Ovary (tissue), 10 donors: ENCODE measurements at regions of chr2 and their contacts with region 1.

Region 1: DNA sequence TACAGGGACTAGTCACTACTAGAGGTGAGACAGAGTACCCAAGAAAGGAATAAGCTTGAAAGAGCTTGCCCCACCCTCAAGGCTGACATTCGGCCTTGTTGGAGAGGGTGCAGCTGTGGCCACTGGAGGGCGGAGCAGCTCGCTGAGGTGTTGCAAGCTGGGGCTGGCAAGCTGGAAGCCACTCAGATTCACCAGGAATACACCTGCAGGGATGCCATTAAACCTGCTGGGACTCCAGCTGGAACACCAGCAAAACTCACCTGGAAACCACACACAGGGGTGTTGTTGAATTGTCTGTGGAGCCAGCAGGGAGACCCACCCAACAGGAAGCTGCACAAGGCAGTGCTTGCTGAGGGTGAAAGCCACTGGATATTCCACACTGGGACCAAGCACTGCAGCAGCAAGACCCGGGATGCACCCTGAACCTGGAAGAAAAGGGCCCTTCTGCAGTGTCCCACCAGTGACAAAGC is 26.1 kb downstream of the KCTD18 start:
- DNase-seq: no peak
- H3K4me3 ChIP-seq: no peak overlapping the region
- H3K27ac ChIP-seq: no peak overlapping the region
- H3K4me1 ChIP-seq: no peaks in the 10 kb centered on the region
- H3K27me3 ChIP-seq: no peaks in the 10 kb centered on the region
- CTCF ChIP-seq: no peak
- EP300 ChIP-seq: no peak
- POLR2A ChIP-seq: no peak

Region 2: DNA sequence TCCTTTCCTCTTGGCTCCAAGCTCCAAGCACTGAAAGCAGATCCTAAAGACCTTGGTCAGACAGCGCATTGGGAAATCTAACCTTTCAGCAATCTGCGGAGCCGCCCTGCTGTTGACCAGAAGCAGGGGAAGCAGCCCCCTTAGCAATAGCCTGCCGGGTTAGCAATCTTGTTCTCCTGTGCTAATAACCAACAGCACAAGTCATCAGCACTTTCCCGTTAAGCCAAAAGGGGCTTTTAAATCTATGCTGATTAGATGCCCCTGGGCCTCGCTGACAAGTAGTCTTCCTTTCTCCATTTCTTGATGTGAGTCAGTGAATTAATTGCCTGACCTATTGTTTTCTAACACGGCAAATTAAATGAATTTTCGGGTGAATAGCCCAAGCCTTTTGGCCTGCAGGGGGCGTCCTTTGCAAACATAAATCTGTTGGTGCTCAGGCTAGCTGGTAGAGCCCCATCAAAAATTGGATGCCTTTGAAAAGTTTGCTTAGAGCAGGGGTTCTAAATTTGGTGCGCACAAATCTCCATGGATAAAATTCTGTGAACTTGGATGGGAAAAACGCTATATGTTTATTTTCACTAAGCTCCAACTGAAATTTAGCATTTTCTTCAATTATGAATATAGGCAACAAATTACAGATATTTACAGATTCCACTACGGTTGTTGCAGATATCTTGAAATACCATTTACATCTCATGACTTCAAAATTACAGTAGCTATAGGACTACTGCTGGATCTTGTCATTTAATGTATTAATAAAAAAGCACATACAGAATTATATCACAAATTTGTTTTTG is 503.7 kb before region 1 on chr2:
- intact Hi-C with region 1: loop called (anchors 2 to 10 kb)
- DNase-seq: peak; percentile 81 to 93 (median 89)
- H3K4me3 ChIP-seq: no peak overlapping the region
- H3K27ac ChIP-seq: no peak overlapping the region
- H3K4me1 ChIP-seq: no peaks in the 10 kb centered on the region
- H3K27me3 ChIP-seq: no peaks in the 10 kb centered on the region
- CTCF ChIP-seq: peak; percentile 67 to 86 (median 84)
- EP300 ChIP-seq: no peak
- POLR2A ChIP-seq: no peak

Region 3: DNA sequence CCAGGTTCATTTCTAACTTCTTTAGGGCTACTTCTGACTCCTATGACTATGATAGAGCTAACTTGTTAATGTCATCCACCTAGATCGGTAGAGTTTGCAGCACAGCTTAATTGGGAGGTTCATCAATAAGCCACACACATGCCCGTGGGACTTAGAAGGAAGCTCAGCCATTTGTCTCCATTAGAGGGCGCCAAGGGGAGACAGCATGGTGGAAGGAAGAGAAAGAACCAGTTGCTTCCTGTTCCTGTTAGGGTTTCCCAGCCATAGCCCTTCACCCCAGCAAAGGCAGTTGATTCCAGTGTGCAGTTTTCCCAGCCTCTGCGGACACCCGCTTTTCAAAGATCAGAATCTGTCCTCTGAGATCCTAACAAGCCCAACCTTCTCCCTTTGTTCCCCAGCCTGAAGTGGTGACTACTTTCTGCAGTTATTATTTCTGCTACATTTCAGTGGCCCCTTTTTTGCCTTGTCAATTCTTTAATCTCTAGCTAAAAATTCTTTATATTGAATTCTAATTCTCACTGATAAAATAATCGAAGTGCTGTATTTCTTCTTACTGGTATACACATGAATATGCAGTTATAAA is 498.0 kb before region 1 on chr2:
- intact Hi-C with region 1: loop called in 2 of 4 experiments (anchors 2 to 10 kb)
- DNase-seq: peak; percentile 38 to 63 (median 41)
- H3K4me3 ChIP-seq: no peak overlapping the region
- H3K27ac ChIP-seq: no peak overlapping the region
- H3K4me1 ChIP-seq: no peaks in the 10 kb centered on the region
- H3K27me3 ChIP-seq: no peaks in the 10 kb centered on the region
- CTCF ChIP-seq: peak in 2 of 3 donors; percentile 24 to 34
- EP300 ChIP-seq: no peak
- POLR2A ChIP-seq: no peak

Region 4: DNA sequence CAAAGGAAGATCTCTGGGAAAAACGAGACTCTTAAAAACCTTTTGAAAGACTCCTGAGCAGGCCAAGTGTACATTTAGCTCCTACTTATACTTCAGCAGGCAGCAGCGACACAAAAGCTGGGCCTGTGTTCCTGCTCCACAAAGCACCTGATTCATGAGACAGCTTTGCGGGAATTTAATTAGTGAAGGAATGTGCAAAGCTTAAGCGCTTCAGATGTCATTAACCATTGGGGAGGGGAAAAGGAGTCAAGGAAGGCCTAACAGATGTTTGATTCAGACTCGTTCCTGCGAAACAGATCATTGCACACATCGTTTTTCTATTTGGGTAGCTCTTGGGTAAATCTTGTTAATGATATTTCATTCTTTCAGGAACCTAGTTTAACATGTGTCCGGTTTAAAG is 402.5 kb before region 1 on chr2:
- intact Hi-C with region 1: loop called in 1 of 4 experiments (anchors 5 kb)
- DNase-seq: no peak
- H3K4me3 ChIP-seq: no peak overlapping the region
- H3K27ac ChIP-seq: no peak overlapping the region
- H3K4me1 ChIP-seq: peaks cover 2% of the 10 kb centered on the region
- H3K27me3 ChIP-seq: no peaks in the 10 kb centered on the region
- CTCF ChIP-seq: no peak
- EP300 ChIP-seq: no peak
- POLR2A ChIP-seq: no peak

Region 5: GRCh38 chr2:200306196-200306930 is 177.4 kb before region 1 on chr2 and contains the start of gene SPATS2L:
- intact Hi-C with region 1: loop called in 3 of 4 experiments (anchors 10 kb)
- DNase-seq: peak; percentile 81 to 86 (median 83)
- H3K4me3 ChIP-seq: peak within 1 kb of the TSS; percentile 73
- H3K27ac ChIP-seq: peak within 1 kb of the TSS; percentile 95
- H3K4me1 ChIP-seq: peaks cover 5% of the 10 kb centered on the region
- H3K27me3 ChIP-seq: no peaks in the 10 kb centered on the region
- CTCF ChIP-seq: no peak
- EP300 ChIP-seq: no peak
- POLR2A ChIP-seq: peak; percentile 22
- total RNA-seq, gene SPATS2L: 36.5 to 88.2 (median 70.6) TPM

Region 6: DNA sequence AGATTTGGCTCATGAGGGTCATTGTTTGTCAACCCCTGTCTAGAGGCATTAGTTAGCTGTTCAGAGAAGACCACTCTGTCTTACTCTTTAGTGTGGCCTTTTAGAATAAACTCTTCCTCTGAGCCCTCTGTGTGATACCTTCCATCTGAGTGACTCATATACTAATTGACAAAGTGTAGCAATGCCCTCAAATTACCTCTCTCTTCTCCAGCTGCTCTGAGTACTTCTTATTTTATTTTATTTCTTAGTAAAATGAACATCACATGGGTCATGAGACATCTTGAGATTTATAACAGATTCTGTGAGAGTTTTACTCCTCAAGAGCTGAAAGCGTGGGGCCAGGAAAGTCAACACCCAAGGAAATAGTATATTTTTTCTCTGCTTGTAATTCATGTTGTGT is 41.3 kb before region 1 on chr2:
- intact Hi-C with region 1: no loop called
- DNase-seq: no peak
- H3K4me3 ChIP-seq: no peak overlapping the region
- H3K27ac ChIP-seq: no peak overlapping the region
- H3K4me1 ChIP-seq: peaks cover 2% of the 10 kb centered on the region
- H3K27me3 ChIP-seq: no peaks in the 10 kb centered on the region
- CTCF ChIP-seq: no peak
- EP300 ChIP-seq: no peak
- POLR2A ChIP-seq: no peak